ENCODE measurements at regions of chr19 and their contacts with region 1.

Region 1: GRCh38 chr19:29665215-29665825 is at the start of gene PLEKHF1:
- DNase-seq: peak; percentile 93 to 97 (median 96)
- ATAC-seq: peak; percentile 95
- H3K4me3 ChIP-seq: peak within 1 kb of the TSS; percentile 78
- H3K27ac ChIP-seq: peak within 1 kb of the TSS; percentile 83
- H3K4me1 ChIP-seq: peaks cover 52 to 71% of the 10 kb centered on the region in 2 experiments
- H3K27me3 ChIP-seq: no peaks in the 10 kb centered on the region
- CTCF ChIP-seq: peak in 1 of 3 experiments; percentile 49; a peak in 3 of 6 replicates
- EP300 ChIP-seq: no peak
- POLR2A ChIP-seq: peak; percentile 71
- RAD21 ChIP-seq: peak; percentile 32 to 54
- polyA plus RNA-seq, gene PLEKHF1: 0.07 TPM in 1 of 2 experiments, not detected in the other

Region 2: DNA sequence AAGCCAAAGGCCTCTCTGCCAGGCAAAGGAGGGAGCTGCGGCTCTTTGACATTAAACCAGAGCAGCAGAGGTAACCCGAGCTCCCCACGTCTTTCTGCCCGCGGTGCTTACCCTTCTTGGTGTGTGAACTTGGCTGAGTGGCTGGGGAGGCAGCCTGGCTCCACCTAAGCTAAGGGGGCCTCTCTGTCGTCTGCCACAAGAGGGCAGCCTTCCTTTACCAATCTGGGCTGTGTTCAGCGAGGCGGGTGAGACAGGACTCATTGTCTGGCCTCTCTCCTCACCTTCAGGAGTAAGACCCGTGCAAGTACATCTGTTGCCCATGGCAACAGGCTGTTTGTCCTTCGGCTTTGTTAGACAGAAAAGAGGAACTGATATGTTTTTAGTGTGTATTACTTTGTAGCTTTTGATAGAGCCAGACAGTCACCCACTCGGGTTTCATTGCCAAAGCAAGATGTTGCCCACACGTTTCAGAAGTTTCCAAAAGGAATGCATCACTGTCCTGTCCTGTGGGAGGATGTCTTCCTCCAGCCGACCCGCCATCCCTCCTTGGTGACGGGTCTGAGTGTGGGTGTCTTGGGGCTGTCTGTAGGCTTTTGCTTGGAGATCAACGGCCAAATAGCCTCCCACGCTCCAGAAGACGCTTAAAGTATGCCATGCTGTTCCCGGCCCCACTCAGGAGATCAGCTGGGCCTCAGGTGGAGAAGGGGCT is 54.6 kb before region 1 on chr19:
- CTCF ChIA-PET with region 1: no interaction called
- POLR2A ChIA-PET with region 1: interaction called, 3 read pairs
- in situ Hi-C with region 1: no loop called
- intact Hi-C with region 1: loop called (anchors 1 kb)
- DNase-seq: peak; percentile 69 to 88 (median 78)
- ATAC-seq: peak; percentile 92
- H3K4me3 ChIP-seq: no peak overlapping the region
- H3K27ac ChIP-seq: no peak overlapping the region
- H3K4me1 ChIP-seq: peaks cover 0 to 10% of the 10 kb centered on the region in 2 experiments; a peak in 2 of 5 replicates
- H3K27me3 ChIP-seq: no peaks in the 10 kb centered on the region
- CTCF ChIP-seq: peak; percentile 90 to 94 (median 92)
- EP300 ChIP-seq: no peak
- POLR2A ChIP-seq: no peak
- RAD21 ChIP-seq: peak; percentile 97 to 99

Region 3: GRCh38 chr19:29624489-29625185 is 40.7 kb before region 1 on chr19:
- CTCF ChIA-PET with region 1: no interaction called
- POLR2A ChIA-PET with region 1: interaction called, 5 read pairs
- in situ Hi-C with region 1: no loop called
- intact Hi-C with region 1: loop called (anchors 5 kb)
- DNase-seq: no peak
- ATAC-seq: peak; percentile 5; the same call in 1 of the 3 replicates
- H3K4me3 ChIP-seq: no peak overlapping the region
- H3K27ac ChIP-seq: no peak overlapping the region; the same call in 2 of the 3 replicates
- H3K4me1 ChIP-seq: peaks cover 22 to 38% of the 10 kb centered on the region in 2 experiments
- H3K27me3 ChIP-seq: no peaks in the 10 kb centered on the region
- CTCF ChIP-seq: peak in 2 of 3 experiments; percentile 11; a peak in 1 of 6 replicates
- EP300 ChIP-seq: no peak
- POLR2A ChIP-seq: no peak
- RAD21 ChIP-seq: no peak

Region 4: DNA sequence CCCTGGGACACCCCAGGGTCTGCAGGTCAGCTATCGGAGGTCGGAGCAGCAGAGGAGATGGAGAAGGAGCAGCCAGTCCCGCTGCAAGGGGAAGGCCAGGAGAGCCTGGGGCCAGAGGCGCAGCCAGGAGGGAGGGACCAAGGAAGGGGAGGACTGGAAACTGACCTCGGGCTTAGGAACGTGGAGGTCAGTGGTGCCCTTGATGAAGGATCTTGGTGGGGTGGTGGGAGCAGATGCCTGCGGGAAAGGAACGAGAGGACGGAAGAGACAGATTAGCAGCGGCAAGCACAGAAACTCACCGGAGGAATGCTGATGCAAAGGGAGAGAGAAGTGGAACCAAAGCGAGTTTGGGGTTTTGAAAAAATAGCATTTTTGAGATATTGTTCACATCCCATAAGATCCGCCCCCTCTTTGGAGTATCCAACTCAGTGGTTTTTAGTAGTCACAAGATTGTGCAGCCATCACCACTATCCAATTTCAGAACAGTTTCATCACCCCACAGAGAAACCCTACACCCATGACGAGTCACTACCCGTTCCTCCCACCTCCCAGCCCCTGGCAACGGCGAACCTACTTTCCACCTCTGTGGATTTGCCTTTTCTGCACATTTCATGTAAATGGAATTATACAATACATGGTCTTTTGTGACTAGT is 22.1 kb after region 1 on chr19:
- CTCF ChIA-PET with region 1: interaction called, 3 read pairs
- POLR2A ChIA-PET with region 1: interaction called, 4 read pairs
- in situ Hi-C with region 1: no loop called
- intact Hi-C with region 1: loop called (anchors 1 kb)
- DNase-seq: peak in 2 of 4 experiments; percentile 45 to 72
- ATAC-seq: peak; percentile 88
- H3K4me3 ChIP-seq: no peak overlapping the region; the same call in 1 of the 2 replicates
- H3K27ac ChIP-seq: peak overlapping the region; percentile 79
- H3K4me1 ChIP-seq: peaks cover 13 to 29% of the 10 kb centered on the region in 2 experiments; a peak in 4 of 5 replicates
- H3K27me3 ChIP-seq: no peaks in the 10 kb centered on the region
- CTCF ChIP-seq: no peak
- EP300 ChIP-seq: peak; percentile 92
- POLR2A ChIP-seq: 0 out of 2 replicates have a peak, but pooled peaks have one; percentile 17
- RAD21 ChIP-seq: no peak

Region 5: GRCh38 chr19:29735800-29736199 is 70.5 kb after region 1 on chr19:
- CTCF ChIA-PET with region 1: no interaction called
- POLR2A ChIA-PET with region 1: no interaction called
- in situ Hi-C with region 1: no loop called
- intact Hi-C with region 1: no loop called
- DNase-seq: no peak
- ATAC-seq: no peak
- H3K4me3 ChIP-seq: no peak overlapping the region
- H3K27ac ChIP-seq: no peak overlapping the region
- H3K4me1 ChIP-seq: no peaks in the 10 kb centered on the region
- H3K27me3 ChIP-seq: peaks cover 53 to 62% of the 10 kb centered on the region in 2 experiments; a peak in 4 of 5 replicates
- CTCF ChIP-seq: no peak
- EP300 ChIP-seq: no peak
- POLR2A ChIP-seq: no peak
- RAD21 ChIP-seq: no peak